ENCODE measurements at regions of chr1 and their contacts with region 1.

Region 1: GRCh38 chr1:37752583-37753471 is 12.1 kb downstream of the EPHA10 start:
- DNase-seq: no peak
- H3K4me3 ChIP-seq: peak overlapping the region in 1 of 3 experiments; percentile 46
- H3K27ac ChIP-seq: no peak overlapping the region
- H3K4me1 ChIP-seq: no peaks in the 10 kb centered on the region
- H3K27me3 ChIP-seq: peaks cover 20% of the 10 kb centered on the region
- CTCF ChIP-seq: no peak

Region 2: DNA sequence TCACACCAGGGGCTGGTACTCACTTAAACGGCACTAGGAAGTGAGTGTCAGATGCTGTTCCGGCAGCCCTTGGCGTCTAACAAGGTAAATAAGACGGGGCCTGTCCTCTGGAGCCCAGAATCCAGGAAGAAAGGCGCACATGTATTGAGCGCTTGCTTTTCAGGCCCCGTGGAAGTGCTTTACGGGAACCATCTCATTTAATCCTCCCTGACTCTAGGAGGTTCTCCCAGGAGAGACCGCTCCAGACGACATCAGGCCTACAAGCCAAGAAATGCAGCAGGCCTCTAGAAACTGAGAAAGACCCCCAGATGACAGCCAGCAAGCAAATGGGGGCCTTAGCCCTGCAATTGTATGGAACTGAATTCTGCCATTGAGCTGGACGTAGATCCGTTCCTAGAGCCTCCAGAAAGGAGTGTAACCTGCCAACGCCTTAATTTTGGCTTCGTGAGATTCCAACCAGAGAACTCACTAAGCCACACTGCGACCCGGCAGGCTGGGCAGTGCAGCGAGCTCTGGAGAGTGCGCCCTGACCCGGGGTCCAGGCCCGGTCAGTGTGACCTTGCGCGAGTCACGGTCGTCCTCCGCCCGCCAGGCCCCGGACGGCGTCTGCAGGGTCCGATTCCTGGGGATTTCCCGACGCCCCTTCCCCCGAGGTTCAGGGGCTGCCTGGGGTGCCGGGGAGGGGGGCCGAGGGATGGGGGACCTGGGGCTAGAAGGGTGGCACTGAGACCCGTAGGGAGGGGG is 40.3 kb after region 1 on chr1:
- CTCF ChIA-PET with region 1: no interaction called
- dilution Hi-C with region 1: no loop called
- in situ Hi-C with region 1: no loop called
- intact Hi-C with region 1: loop called (anchors 1 kb)
- DNase-seq: no peak
- H3K4me3 ChIP-seq: no peak overlapping the region
- H3K27ac ChIP-seq: no peak overlapping the region
- H3K4me1 ChIP-seq: peaks cover 9% of the 10 kb centered on the region
- H3K27me3 ChIP-seq: peaks cover 3% of the 10 kb centered on the region
- CTCF ChIP-seq: no peak